ENCODE measurements at regions of chr2 and their contacts with region 1.

Region 1: DNA sequence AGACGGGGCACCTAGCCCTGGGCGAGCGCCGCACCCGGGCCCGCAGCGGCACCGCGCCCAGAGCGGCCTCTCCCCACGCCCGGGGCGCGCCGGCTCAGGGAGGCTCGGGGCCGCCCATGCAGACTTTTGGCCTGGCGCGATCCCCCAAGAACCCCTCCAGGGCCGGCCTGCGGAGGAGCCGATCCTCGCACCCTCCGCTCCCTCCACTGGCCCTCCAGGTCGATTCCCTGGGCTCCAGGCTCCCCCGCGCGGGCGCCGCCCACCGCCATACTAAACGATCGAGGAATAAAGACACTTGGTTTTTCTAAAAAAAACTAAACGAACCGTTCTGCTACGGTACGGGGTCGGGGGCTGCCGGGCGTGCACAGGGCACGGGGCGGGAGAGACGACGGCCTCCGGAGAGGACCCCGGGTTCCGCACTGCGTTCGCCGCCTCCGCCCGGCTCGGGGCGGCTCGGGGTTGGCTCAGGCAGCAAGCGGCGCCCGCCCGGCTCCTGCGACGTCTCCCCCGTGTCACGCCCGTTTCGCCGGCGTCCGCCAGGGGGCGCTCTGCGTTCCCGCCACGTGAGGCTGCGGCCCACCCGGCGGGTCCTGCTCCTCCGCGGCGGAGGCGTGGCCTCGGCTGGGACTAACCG is 365 bp upstream of the KHK start:
- DNase-seq: peak; percentile 91 to 99 (median 98)
- ATAC-seq: peak; percentile 92
- H3K4me3 ChIP-seq: peak overlapping the region; percentile 70
- H3K4me3 Mint-ChIP-seq: peak overlapping the region; percentile 91
- H3K27ac ChIP-seq: peak overlapping the region; percentile 65 to 70
- H3K27ac Mint-ChIP-seq: peak overlapping the region; percentile 81
- H3K4me1 ChIP-seq: peaks cover 50% of the 10 kb centered on the region
- H3K4me1 Mint-ChIP-seq: peaks cover 32% of the 10 kb centered on the region
- H3K27me3 ChIP-seq: no peaks in the 10 kb centered on the region
- H3K27me3 Mint-ChIP-seq: no peaks in the 10 kb centered on the region
- CTCF ChIP-seq: peak; percentile 75

Region 2: GRCh38 chr2:26964446-26965130 is 121.6 kb before region 1 on chr2:
- CTCF ChIA-PET with region 1: interaction called, 9 read pairs
- POLR2A ChIA-PET with region 1: no interaction called
- intact Hi-C with region 1: loop called in 1 of 2 experiments (anchors 5 kb)
- DNase-seq: no peak
- ATAC-seq: no peak
- H3K4me3 ChIP-seq: no peak overlapping the region
- H3K4me3 Mint-ChIP-seq: no peak overlapping the region
- H3K27ac ChIP-seq: no peak overlapping the region
- H3K27ac Mint-ChIP-seq: no peak overlapping the region
- H3K4me1 ChIP-seq: peaks cover 9% of the 10 kb centered on the region
- H3K4me1 Mint-ChIP-seq: peaks cover 10% of the 10 kb centered on the region
- H3K27me3 ChIP-seq: peaks cover 10 to 15% of the 10 kb centered on the region in 2 experiments
- H3K27me3 Mint-ChIP-seq: peaks cover 50% of the 10 kb centered on the region
- CTCF ChIP-seq: no peak

Region 3: DNA sequence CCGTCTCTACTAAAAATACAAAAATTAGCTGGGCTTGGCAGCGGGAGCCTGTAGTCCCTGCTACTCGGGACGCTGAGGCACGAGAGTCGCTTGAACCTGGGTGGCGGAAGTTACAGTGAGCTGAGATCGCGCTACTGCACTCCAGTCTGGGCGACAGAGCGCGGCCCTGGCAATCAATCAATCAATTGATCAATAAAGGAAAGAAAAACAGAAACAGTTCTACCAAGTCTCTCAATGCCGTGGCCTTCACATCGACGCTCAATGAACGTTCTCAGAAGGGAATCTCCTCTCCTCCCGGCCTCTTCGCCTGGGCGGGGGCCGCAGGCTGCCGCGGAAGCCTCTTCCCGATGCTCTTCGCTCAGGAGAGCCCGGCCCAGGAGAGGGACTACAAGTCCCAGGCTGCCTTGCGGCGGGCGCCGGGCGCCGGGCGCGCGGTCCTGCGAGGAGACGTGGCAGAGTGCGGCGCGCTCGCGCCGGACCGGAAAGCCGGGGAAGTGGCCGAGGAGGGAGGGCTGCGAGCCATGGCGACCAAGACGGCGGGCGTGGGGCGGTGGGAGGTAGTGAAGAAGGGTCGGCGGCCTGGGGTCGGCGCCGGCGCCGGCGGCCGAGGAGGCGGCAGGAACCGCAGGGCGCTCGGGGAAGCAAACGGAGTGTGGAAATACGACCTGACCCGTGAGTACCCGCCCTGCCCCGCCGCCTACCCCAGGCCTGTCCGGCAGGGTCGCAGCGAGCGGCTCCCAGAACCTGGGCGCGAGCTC is 53.5 kb before region 1 on chr2 and contains the start of gene TMEM214:
- CTCF ChIA-PET with region 1: interaction called, 4 read pairs
- POLR2A ChIA-PET with region 1: interaction called, 5 read pairs
- intact Hi-C with region 1: loop called in 1 of 2 experiments (anchors 1 kb)
- DNase-seq: peak; percentile 55 to 86 (median 74)
- ATAC-seq: peak; percentile 94
- H3K4me3 ChIP-seq: peak within 1 kb of the TSS; percentile 92
- H3K4me3 Mint-ChIP-seq: peak within 1 kb of the TSS; percentile 96
- H3K27ac ChIP-seq: peak within 1 kb of the TSS; percentile 64 to 73
- H3K27ac Mint-ChIP-seq: peak within 1 kb of the TSS; percentile 83
- H3K4me1 ChIP-seq: peaks cover 36% of the 10 kb centered on the region
- H3K4me1 Mint-ChIP-seq: peaks cover 45% of the 10 kb centered on the region
- H3K27me3 ChIP-seq: no peaks in the 10 kb centered on the region
- H3K27me3 Mint-ChIP-seq: no peaks in the 10 kb centered on the region
- CTCF ChIP-seq: no peak
- total RNA-seq, gene TMEM214: 22.0 to 24.6 TPM

Region 4: DNA sequence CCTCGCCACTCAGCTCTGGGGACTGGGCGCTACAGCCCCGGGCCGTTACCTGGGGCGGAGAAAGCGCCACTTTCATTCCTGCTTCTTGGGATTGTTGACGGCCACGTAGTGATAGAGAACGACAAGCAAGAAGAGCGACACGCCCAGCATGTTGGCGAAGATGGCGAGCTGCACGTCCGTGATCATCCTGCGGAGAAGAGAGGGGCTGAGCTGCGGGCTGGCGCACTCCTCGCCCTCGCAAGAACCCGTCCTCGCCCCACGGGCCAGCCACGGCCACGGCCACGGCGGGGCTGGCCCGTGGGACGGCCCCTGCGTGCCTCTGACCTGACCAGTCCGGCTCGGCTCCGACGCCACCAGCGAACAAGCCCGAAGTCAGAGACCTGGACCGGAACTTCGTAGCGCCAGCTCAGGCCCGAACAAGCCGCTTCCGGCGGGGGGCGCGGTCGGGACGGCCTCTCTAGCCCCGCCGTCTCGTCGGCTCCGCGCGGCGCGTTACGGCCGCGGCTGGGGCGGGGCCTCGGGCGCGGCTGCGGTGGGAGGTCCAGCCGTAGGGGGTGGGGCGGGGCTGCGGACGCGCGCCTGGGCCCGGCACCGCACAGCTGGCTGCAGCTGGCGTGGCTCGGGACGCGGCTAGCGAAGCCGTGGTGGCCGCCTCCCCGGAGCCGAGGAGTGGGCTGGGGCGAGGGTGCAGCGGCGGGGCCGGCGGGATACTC is 14.8 kb before region 1 on chr2 and contains the start of gene OST4:
- CTCF ChIA-PET with region 1: interaction called, 9 read pairs
- POLR2A ChIA-PET with region 1: interaction called, 161 read pairs
- intact Hi-C with region 1: loop called in 1 of 2 experiments (anchors 1 kb)
- DNase-seq: peak; percentile 76 to 95 (median 86)
- ATAC-seq: peak; percentile 86
- H3K4me3 ChIP-seq: peak within 1 kb of the TSS; percentile 99
- H3K4me3 Mint-ChIP-seq: peak within 1 kb of the TSS; percentile 99
- H3K27ac ChIP-seq: peak within 1 kb of the TSS; percentile 90 to 91
- H3K27ac Mint-ChIP-seq: peak within 1 kb of the TSS; percentile 98
- H3K4me1 ChIP-seq: peaks cover 74% of the 10 kb centered on the region
- H3K4me1 Mint-ChIP-seq: peaks cover 84% of the 10 kb centered on the region
- H3K27me3 ChIP-seq: no peaks in the 10 kb centered on the region
- H3K27me3 Mint-ChIP-seq: no peaks in the 10 kb centered on the region
- CTCF ChIP-seq: no peak
- total RNA-seq, gene OST4: 232 to 254 TPM

Region 5: DNA sequence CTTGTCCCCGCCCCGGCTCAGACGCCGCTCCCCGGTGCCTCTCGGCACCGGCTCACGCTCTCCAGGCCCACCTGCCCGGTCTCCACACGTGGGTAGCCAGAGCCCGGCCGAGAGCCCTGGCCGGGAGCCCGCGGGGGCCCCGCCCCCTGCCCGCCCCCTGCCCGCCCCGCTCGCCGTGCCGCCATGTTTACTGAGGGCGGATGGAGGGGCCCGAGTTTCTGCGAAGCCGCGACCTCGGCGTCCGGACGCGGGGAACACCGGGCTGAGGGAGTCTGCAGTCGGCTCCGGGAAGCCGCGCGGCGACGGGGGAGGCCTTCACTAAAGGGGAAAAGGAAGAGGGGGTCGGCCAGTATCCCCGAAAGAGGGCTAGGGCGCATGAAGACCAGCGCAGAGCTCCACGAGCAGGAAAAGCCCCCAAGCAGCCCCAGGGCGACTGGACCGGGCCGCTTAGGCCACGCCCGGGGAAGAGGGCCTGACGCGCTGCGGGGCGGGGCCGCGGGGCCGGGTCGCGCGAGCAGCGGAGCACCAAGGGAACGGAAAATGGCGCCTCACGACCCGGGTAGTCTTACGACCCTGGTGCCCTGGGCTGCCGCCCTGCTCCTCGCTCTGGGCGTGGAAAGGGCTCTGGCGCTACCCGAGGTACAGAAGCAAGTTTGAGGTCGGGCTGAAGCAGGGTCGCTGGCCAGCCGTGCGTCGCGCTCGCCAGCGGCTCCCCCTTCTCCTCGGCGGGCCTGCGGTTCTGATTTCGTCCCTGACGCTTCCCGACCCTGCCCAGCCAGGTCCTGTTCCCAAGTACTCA is 125.8 kb after region 1 on chr2 and contains the starts of genes ATRAID and SLC5A6:
- CTCF ChIA-PET with region 1: no interaction called
- POLR2A ChIA-PET with region 1: interaction called, 12 read pairs
- intact Hi-C with region 1: loop called (anchors 1 to 2 kb)
- DNase-seq: peak; percentile 76 to 95 (median 86)
- ATAC-seq: peak; percentile 83
- H3K4me3 ChIP-seq: peak within 1 kb of the TSS; percentile 78
- H3K4me3 Mint-ChIP-seq: peak within 1 kb of the TSS; percentile 98
- H3K27ac ChIP-seq: peak within 1 kb of the TSS; percentile 96 to 97
- H3K27ac Mint-ChIP-seq: peak within 1 kb of the TSS; percentile 98
- H3K4me1 ChIP-seq: peaks cover 26% of the 10 kb centered on the region
- H3K4me1 Mint-ChIP-seq: peaks cover 40% of the 10 kb centered on the region
- H3K27me3 ChIP-seq: no peaks in the 10 kb centered on the region
- H3K27me3 Mint-ChIP-seq: no peaks in the 10 kb centered on the region
- CTCF ChIP-seq: no peak
- total RNA-seq, gene ATRAID: 79.1 to 82.5 TPM
- total RNA-seq, gene SLC5A6: 196 to 207 TPM